ENCODE measurements at regions of chr21 and their contacts with region 1.

Region 1: DNA sequence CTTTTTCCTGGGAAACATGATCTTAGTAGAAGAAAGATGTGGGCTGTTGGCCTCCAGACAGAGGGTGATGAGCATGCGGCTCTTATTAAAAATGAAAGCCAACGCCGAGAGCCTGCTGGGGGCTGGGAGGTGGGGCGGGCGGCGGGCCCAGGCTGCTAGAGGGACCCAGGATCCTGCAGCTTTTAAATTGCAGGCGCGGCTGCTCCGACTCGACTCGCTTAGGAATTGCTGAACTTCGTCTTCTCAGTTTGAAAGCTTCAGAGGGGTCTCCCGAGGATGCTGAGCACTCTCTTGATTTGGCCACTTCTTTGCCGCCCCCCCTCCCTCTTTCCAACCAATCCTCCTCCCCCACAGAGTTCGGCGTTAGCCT is 1.2 kb downstream of the AGPAT3 start:
- DNase-seq: peak in 4 of 5 donors; percentile 47 to 63 (median 57)
- ATAC-seq: peak; percentile 32 to 70 (median 50)
- H3K4me3 ChIP-seq: peak overlapping the region; percentile 69 to 97 (median 85)
- H3K27ac ChIP-seq: peak overlapping the region; percentile 73 to 96 (median 93)
- H3K4me1 ChIP-seq: peaks cover 0 to 57% (median 26%) of the 10 kb centered on the region in 12 donors
- H3K27me3 ChIP-seq: no peaks in the 10 kb centered on the region
- CTCF ChIP-seq: no peak
- POLR2A ChIP-seq: no peak

Region 2: DNA sequence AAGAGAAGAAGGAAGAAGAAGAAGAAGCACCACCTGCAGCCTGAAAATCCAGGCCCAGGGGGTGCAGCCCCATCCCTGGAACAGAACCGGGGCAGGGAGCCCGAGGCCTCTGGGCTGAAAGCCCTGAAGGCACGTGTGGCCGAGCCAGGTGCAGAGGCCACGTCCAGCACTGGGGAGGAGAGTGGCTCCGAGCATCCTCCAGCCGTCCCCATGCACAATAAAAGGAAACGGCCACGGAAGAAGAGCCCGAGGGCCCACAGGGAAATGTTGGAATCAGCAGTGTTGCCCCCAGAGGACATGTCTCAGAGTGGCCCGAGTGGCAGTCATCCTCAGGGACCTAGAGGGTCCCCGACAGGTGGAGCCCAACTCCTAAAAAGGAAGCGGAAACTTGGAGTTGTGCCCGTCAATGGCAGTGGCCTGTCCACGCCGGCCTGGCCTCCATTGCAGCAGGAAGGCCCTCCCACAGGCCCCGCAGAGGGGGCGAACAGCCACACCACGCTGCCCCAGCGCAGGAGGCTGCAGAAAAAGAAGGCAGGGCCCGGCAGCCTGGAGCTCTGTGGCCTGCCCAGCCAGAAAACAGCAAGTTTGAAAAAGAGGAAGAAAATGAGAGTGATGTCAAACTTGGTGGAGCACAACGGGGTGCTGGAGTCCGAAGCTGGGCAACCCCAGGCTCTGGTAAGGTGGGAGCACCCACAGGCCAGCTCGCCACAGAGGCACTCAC is 178.5 kb before region 1 on chr21:
- intact Hi-C with region 1: no loop called
- DNase-seq: peak in 2 of 5 donors; percentile 30 to 32
- ATAC-seq: peak in 3 of 4 donors; percentile 18 to 47 (median 23)
- H3K4me3 ChIP-seq: no peak overlapping the region
- H3K27ac ChIP-seq: peak overlapping the region in 2 of 12 donors; percentile 9 to 57
- H3K4me1 ChIP-seq: peaks cover 0 to 22% (median 0%) of the 10 kb centered on the region in 12 donors
- H3K27me3 ChIP-seq: no peaks in the 10 kb centered on the region
- CTCF ChIP-seq: no peak
- POLR2A ChIP-seq: no peak

Region 3: GRCh38 chr21:43728467-43729390 is 137.5 kb before region 1 on chr21:
- intact Hi-C with region 1: no loop called
- DNase-seq: peak; percentile 95 to 98 (median 96)
- ATAC-seq: peak; percentile 88 to 92 (median 91)
- H3K4me3 ChIP-seq: peak overlapping the region; percentile 50 to 78 (median 64)
- H3K27ac ChIP-seq: peak overlapping the region; percentile 79 to 96 (median 92)
- H3K4me1 ChIP-seq: peaks cover 10 to 80% (median 53%) of the 10 kb centered on the region in 12 donors
- H3K27me3 ChIP-seq: no peaks in the 10 kb centered on the region
- CTCF ChIP-seq: peak; percentile 16 to 65 (median 48)
- POLR2A ChIP-seq: peak in 1 of 2 donors; percentile 73

Region 4: DNA sequence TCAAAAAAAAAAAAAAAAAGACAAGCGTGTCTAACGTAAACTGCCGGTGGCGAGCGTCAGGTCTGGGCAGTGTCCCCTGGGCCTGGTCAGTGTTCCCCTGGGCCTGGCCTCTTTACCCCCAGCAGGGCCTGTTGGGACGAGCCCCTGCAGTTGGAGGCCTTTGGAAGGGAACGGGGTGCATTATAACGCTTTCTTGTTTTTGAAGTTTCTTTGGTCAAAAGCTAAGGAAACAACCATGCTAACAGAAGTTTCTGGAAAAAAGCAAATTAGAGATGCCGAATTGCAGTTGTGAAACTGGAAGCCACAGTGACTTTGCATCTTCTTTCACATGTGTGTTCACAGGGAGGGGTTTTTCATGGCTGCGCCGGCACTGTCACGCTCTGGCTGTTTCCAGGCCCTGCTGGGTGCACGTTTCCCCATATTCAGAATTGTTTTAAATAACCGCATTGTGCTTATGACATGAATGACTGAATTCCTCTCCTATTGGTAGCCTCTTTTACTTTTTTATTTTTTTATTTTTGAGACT is 60.9 kb before region 1 on chr21:
- intact Hi-C with region 1: loop called in 1 of 10 experiments (anchors 10 kb)
- DNase-seq: peak in 2 of 5 donors; percentile 19 to 27
- ATAC-seq: no peak
- H3K4me3 ChIP-seq: no peak overlapping the region
- H3K27ac ChIP-seq: peak overlapping the region in 1 of 12 donors; percentile 58
- H3K4me1 ChIP-seq: no peaks in the 10 kb centered on the region
- H3K27me3 ChIP-seq: no peaks in the 10 kb centered on the region
- CTCF ChIP-seq: no peak
- POLR2A ChIP-seq: no peak

Region 5: DNA sequence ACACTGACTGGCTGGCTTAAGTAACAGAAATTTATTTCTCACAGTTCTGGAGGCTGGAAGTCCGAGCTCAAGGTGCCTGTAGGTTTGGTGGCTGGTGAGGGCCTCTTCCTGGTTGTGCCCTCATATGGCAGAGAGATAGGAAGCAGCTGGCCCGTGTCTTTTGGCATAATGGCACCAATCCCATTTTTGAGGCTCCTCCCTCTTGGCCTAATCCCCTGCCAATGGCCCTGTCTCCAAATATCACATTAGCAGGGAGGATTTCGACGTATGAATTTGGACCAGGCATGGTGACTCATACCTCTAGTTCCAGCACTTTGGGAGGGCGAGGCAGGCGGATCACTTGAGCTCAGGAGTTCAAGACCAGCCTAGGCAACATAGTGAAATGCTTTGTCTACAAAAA is 36.2 kb after region 1 on chr21:
- intact Hi-C with region 1: loop called in 2 of 10 experiments (anchors 5 kb)
- DNase-seq: peak in 1 of 5 donors; percentile 66
- ATAC-seq: peak; percentile 49 to 67 (median 60)
- H3K4me3 ChIP-seq: no peak overlapping the region
- H3K27ac ChIP-seq: peak overlapping the region in 10 of 12 donors; percentile 20 to 89 (median 80)
- H3K4me1 ChIP-seq: peaks cover 3 to 25% (median 15%) of the 10 kb centered on the region in 12 donors
- H3K27me3 ChIP-seq: no peaks in the 10 kb centered on the region
- CTCF ChIP-seq: no peak
- POLR2A ChIP-seq: no peak

Region 6: DNA sequence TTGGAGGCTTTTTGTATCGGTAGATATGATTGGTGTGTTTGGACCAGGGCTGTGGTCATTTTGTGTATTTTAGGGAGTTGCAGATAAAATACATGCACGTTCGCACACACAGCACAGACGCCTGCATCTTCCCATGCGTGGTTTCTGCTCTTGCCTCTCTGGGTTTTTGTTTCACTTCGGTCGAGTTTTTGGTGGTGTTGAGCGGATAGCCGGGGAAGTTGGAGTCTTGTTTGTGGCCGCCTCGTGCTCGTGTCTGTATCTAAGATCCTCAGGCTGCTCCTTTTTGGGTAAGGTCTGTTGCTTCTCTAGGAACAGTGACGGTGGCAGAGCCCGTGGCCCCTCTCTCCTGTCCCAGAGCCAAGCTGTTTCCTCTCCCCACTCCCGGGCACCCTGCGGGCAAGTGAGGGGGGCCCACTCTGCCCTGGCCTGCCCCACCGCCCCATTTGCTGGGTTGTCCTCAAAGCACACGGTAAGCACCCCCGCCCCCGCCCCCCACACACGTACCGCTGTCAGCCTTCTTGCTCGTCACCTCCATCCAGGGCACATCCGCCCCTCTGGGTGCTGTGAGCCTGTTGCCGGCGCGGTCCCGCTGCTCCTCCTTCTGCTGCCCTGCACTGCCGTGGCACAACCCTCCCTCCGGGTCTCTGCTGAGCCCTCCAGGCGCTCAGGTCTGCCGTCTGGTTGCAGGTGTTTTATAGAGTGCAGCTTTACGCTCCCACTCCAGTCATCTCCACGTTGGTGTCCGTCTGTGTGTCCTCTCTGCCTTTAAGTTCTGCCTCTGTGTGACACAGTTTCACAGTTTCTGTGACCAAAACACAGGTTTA is 50.7 kb after region 1 on chr21:
- intact Hi-C with region 1: loop called in 1 of 10 experiments (anchors 5 kb)
- DNase-seq: peak in 2 of 5 donors; percentile 44 to 64
- ATAC-seq: peak; percentile 32 to 65 (median 53)
- H3K4me3 ChIP-seq: peak overlapping the region in 8 of 12 donors; percentile 20 to 50 (median 35)
- H3K27ac ChIP-seq: peak overlapping the region in 4 of 12 donors; percentile 28 to 53 (median 46)
- H3K4me1 ChIP-seq: peaks cover 4 to 62% (median 27%) of the 10 kb centered on the region in 12 donors
- H3K27me3 ChIP-seq: no peaks in the 10 kb centered on the region
- CTCF ChIP-seq: no peak
- POLR2A ChIP-seq: no peak

Region 7: GRCh38 chr21:43929217-43930025 is 63.2 kb after region 1 on chr21:
- intact Hi-C with region 1: loop called in 7 of 10 experiments (anchors 2 to 5 kb)
- DNase-seq: peak; percentile 78 to 93 (median 82)
- ATAC-seq: peak; percentile 92 to 94 (median 93)
- H3K4me3 ChIP-seq: peak overlapping the region in 1 of 12 donors; percentile 15
- H3K27ac ChIP-seq: peak overlapping the region; percentile 73 to 95 (median 86)
- H3K4me1 ChIP-seq: peaks cover 4 to 60% (median 34%) of the 10 kb centered on the region in 12 donors
- H3K27me3 ChIP-seq: no peaks in the 10 kb centered on the region
- CTCF ChIP-seq: peak in 9 of 12 donors; percentile 3 to 57 (median 39)
- POLR2A ChIP-seq: peak in 1 of 2 donors; percentile 23

Region 8: GRCh38 chr21:43938751-43939442 is 72.7 kb after region 1 on chr21:
- intact Hi-C with region 1: loop called in 3 of 10 experiments (anchors 5 kb)
- DNase-seq: peak; percentile 79 to 91 (median 83)
- ATAC-seq: peak; percentile 72 to 91 (median 88)
- H3K4me3 ChIP-seq: peak overlapping the region in 10 of 12 donors; percentile 27 to 59 (median 44)
- H3K27ac ChIP-seq: peak overlapping the region in 7 of 12 donors; percentile 21 to 74 (median 55)
- H3K4me1 ChIP-seq: peaks cover 2 to 29% (median 19%) of the 10 kb centered on the region in 12 donors
- H3K27me3 ChIP-seq: no peaks in the 10 kb centered on the region
- CTCF ChIP-seq: peak; percentile 88 to 96 (median 94)
- POLR2A ChIP-seq: peak in 1 of 2 donors; percentile 31

Region 9: GRCh38 chr21:43975495-43975993 is 109.3 kb after region 1 on chr21:
- intact Hi-C with region 1: loop called in 1 of 10 experiments (anchors 5 kb)
- DNase-seq: peak; percentile 62 to 87 (median 75)
- ATAC-seq: peak; percentile 38 to 80 (median 76)
- H3K4me3 ChIP-seq: no peak overlapping the region
- H3K27ac ChIP-seq: no peak overlapping the region
- H3K4me1 ChIP-seq: peaks cover 0 to 9% (median 3%) of the 10 kb centered on the region in 12 donors
- H3K27me3 ChIP-seq: no peaks in the 10 kb centered on the region
- CTCF ChIP-seq: peak; percentile 86 to 98 (median 91)
- POLR2A ChIP-seq: no peak

Measured in heart left ventricle (tissue), 16 donors.